ENCODE measurements at regions of chr4 and their contacts with region 1.

Region 1: GRCh38 chr4:10655986-10656385 is 28.6 kb downstream of the CLNK start:
- DNase-seq: no peak
- H3K4me3 Mint-ChIP-seq: no peak overlapping the region
- H3K27ac Mint-ChIP-seq: no peak overlapping the region
- H3K4me1 Mint-ChIP-seq: peaks cover 23% of the 10 kb centered on the region
- H3K27me3 Mint-ChIP-seq: no peaks in the 10 kb centered on the region

Region 2: GRCh38 chr4:10730590-10730989 is 74.6 kb after region 1 on chr4:
- CTCF ChIA-PET with region 1: no interaction called
- intact Hi-C with region 1: loop called (anchors 5 kb)
- DNase-seq: no peak
- H3K4me3 Mint-ChIP-seq: no peak overlapping the region
- H3K27ac Mint-ChIP-seq: no peak overlapping the region
- H3K4me1 Mint-ChIP-seq: peaks cover 39% of the 10 kb centered on the region
- H3K27me3 Mint-ChIP-seq: no peaks in the 10 kb centered on the region